ENCODE measurements at regions of chr22 and their contacts with region 1.

Region 1: GRCh38 chr22:48098243-48098920 is 1335.9 kb downstream of the TBC1D22A start:
- DNase-seq: no peak
- H3K4me3 ChIP-seq: no peak overlapping the region
- CTCF ChIP-seq: no peak

Region 2: DNA sequence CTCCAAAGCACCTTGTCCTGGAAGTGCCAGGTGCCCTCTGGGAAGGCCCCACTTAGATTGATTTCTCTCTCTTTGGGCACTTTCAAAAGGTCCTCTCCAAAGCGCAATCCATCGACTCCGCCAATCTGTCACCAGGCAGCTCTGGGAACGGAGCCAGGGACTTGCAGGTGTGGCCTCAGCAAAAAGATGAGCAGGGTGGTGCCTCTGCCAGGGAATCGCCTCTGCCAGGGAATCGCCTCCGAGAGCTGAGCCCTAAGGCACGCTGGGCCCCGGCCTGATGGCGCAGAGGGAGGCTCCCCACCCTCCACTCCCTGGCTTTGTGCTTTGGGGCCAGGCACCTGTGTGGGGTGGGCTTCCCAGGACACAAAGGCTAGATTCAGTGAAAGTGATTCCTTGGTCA is 55.3 kb after region 1 on chr22:
- in situ Hi-C with region 1: loop called (anchors 5 kb)
- DNase-seq: no peak
- H3K4me3 ChIP-seq: no peak overlapping the region
- CTCF ChIP-seq: no peak

Measured in astrocyte of the cerebellum (primary cell).